ENCODE measurements at regions of chr4 and their contacts with region 1.

Region 1: DNA sequence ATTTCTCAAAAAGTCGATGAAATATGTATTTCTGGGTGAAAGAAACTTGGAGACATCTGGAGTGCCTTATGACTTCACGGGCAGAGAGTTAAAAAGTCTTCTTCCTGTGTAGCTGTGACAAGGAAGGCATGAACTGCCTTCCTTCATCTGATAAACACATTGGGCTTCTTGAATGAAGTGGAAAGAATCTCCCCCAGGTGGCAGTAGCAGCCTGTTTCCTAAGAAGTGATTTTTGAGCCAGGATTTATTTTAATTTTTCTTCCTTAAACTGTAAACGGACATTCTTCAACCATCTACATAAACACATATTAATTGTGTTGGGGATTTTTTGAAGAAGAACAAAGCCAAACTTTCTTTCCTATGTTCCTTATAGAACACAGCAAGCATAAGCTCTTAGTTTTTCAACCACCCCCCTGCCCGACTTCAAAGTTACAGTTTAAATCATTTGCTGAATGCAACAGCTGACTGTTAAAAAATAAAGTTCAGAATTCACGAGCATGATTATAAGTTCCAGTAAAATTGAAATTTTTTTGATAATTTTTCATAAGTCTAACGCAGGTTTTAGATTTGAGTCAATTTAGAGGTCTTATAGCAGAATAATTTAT is 980 bp upstream of the GIMD1 start:
- DNase-seq: no peak
- ATAC-seq: no peak
- H3K4me3 Mint-ChIP-seq: no peak overlapping the region
- H3K27ac Mint-ChIP-seq: no peak overlapping the region
- H3K4me1 Mint-ChIP-seq: no peaks in the 10 kb centered on the region
- H3K27me3 Mint-ChIP-seq: peaks cover 10% of the 10 kb centered on the region
- CTCF ChIP-seq: no peak

Region 2: DNA sequence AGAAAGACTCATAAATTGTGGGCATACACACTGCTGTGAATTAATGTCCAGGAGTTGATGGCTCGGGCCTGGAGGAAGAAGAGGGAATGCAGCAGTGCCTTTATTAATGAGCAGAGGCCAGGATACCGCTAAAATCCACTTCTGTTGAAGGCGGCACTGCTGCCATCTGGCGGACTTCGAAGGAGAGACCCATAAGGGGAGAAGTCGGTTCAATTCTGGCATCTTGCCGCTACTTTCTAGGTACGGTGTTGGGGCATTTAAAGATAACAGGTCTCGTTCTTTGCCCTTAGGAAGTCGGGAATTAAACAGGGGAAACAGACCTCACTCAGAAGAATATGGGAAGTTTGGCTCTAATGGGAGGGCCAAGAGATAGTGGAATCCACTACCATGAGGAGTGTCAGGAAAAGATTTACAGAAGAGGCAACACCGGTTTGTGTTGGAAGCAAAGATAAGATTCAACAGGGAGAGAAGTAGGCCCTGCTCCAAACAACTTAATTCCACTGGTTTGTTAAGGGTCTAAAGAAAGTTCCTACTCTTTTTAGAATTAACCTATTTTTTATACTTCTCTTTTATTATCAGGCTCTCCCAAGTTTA is 132.6 kb after region 1 on chr4:
- CTCF ChIA-PET with region 1: no interaction called
- POLR2A ChIA-PET with region 1: no interaction called
- intact Hi-C with region 1: loop called (anchors 5 kb)
- DNase-seq: no peak
- ATAC-seq: peak; percentile 31
- H3K4me3 Mint-ChIP-seq: no peak overlapping the region
- H3K27ac Mint-ChIP-seq: no peak overlapping the region
- H3K4me1 Mint-ChIP-seq: no peaks in the 10 kb centered on the region
- H3K27me3 Mint-ChIP-seq: peaks cover 4% of the 10 kb centered on the region
- CTCF ChIP-seq: no peak

Region 3: GRCh38 chr4:106893903-106894302 is 524.3 kb after region 1 on chr4:
- CTCF ChIA-PET with region 1: no interaction called
- POLR2A ChIA-PET with region 1: no interaction called
- intact Hi-C with region 1: no loop called
- DNase-seq: no peak
- ATAC-seq: no peak
- H3K4me3 Mint-ChIP-seq: no peak overlapping the region
- H3K27ac Mint-ChIP-seq: no peak overlapping the region
- H3K4me1 Mint-ChIP-seq: no peaks in the 10 kb centered on the region
- H3K27me3 Mint-ChIP-seq: no peaks in the 10 kb centered on the region
- CTCF ChIP-seq: no peak

Measured in activated B cell treated with CpG ODN at 0.5 μM for 24 hours (primary cell).